ENCODE measurements at regions of chr19 and their contacts with region 1.

Region 1: DNA sequence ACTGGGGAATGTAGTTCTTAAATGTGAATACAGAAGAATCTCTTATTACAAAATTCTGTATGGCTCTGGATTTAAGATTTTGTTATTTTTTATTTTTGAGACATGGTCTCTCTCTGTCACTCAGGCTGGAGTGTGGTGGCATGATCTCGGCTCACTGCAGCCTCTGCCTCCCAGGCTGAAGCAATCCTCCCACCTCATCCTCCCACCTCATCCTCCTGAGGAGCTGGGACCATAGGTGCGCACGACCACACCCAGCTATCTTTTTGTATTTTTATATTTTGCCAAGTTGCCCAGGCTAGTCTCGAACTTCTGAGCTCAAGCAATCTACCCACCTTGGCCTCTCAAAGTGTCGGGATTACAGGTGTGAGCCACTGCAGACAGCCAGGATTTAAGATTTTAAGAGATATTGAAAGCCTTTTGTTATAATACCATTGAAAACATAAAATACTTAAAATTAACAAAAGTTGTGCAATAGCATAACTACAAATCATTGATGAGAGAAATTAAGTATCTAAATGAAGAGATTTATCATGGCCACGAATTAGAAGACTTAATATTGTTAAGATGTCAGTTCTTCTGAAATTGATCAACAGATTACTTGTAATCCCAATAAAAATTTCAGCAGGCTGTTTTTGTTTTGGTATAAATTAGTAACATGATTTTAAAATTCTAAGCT is 13.4 kb downstream of the CYP2A6 start:
- DNase-seq: no peak
- ATAC-seq: no peak
- H3K4me3 Mint-ChIP-seq: no peak overlapping the region
- H3K27ac Mint-ChIP-seq: no peak overlapping the region
- H3K4me1 Mint-ChIP-seq: peaks cover 13% of the 10 kb centered on the region
- H3K27me3 Mint-ChIP-seq: no peaks in the 10 kb centered on the region

Region 2: DNA sequence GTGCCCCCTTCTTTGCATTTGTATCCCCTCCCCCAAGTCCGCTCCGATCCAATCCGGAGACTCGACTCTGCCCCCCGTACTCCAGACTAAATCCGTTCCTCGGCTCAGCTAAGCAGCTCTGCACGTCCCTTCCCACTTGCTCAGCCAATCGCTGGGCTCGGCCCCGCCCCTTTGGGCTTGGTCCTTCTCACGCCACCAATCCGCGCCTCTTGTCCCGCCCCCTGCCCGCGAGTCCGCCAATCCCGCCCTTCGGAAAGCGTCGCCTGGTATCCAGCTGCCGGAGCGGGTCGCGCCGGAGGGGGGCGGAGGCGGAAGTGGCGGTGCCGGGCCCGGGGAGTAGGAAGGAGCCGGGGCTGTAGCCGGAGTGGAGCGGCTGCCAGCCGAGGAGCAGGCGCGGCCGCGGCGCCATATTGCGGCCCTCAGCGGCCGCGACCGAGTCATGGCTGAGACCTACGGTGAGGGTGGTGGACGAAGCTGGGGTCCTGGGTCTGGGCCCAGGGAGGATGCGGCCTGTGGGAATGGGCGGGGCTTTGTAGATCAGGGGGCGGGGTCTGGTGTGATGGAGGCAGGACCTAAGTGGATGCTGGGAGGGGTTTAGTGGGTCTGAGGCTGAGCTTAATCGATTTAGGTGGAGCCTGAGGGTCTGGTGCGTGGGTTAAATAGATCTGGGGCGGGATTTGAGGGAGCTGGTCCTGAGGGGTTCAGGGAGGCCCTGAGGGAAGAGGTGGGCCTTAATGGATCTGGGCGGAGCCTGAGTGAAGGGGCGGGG is 58.8 kb before region 1 on chr19 and contains the start of gene RAB4B:
- CTCF ChIA-PET with region 1: no interaction called
- POLR2A ChIA-PET with region 1: no interaction called
- intact Hi-C with region 1: no loop called
- DNase-seq: peak; percentile 100
- ATAC-seq: peak; percentile 79
- H3K4me3 Mint-ChIP-seq: peak within 1 kb of the TSS; percentile 84
- H3K27ac Mint-ChIP-seq: peak within 1 kb of the TSS; percentile 94
- H3K4me1 Mint-ChIP-seq: peaks cover 38% of the 10 kb centered on the region
- H3K27me3 Mint-ChIP-seq: no peaks in the 10 kb centered on the region
- total RNA-seq, gene RAB4B: 26.4 to 33.7 TPM

Region 3: DNA sequence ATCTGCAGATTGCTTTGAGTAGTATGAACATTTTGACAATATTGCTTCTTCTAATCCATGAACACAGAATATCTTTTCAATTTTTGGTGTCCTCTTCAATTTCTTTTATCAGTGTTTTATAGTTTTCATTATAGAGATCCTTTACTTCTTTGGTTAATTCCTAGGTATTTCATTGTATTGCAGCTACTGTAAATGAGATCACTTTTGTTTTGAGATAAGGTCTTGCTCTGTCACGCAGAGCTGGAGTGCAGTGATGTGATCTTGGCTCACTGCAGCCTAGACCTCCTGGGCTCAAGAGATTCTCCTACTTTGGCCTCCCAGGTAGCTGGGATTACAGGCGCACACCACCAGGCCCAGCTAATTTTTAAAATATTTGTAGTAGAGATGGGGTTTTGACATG is 35.3 kb after region 1 on chr19:
- CTCF ChIA-PET with region 1: no interaction called
- POLR2A ChIA-PET with region 1: no interaction called
- intact Hi-C with region 1: loop called in 1 of 2 experiments (anchors 5 kb)
- DNase-seq: no peak
- ATAC-seq: no peak
- H3K4me3 Mint-ChIP-seq: no peak overlapping the region
- H3K27ac Mint-ChIP-seq: no peak overlapping the region
- H3K4me1 Mint-ChIP-seq: peaks cover 9% of the 10 kb centered on the region
- H3K27me3 Mint-ChIP-seq: peaks cover 14% of the 10 kb centered on the region

Measured in activated CD4-positive, alpha-beta T cell treated with anti-CD3 and anti-CD28 coated beads for 36 hours (primary cell).